ENCODE measurements at regions of chr2 and their contacts with region 1.

Region 1: DNA sequence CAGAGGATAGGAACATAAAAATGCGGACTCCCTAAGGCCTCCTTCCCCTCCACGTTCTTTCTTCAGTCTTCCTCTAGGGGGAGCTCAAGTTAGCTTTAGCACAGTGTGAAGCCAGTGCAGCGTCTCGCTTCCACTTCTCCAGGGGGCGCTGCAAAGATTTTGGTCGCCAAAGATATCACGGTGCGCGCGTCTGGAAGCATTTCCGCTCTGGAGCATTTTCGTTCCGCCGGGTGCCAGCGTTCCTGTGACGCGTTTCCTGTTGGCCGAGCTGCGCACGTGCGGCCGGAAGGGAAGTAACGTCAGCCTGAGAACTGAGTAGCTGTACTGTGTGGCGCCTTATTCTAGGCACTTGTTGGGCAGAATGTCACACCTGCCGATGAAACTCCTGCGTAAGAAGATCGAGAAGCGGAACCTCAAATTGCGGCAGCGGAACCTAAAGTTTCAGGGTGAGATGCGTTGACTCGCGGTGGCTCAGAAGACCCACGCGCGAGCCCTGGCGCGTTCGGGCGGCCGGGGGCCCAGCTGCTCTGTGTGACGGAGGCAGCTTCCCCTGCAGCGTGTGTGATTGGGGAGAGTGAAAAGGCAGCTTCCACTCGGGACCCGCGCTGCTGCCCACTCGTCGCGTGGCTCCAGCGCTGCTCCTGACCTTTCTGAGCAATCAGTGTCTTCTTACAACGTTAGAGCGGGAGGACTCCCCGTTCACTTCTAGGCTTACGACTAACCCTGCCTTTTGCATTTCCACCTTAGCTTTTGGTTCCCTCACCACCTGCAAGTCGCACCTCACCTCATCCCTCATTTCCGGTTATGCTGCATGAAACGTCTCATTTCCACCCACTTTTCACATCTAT is at the start of gene DDX18:
- DNase-seq: peak; percentile 97
- H3K4me3 Mint-ChIP-seq: peak within 1 kb of the TSS; percentile 89
- H3K27ac Mint-ChIP-seq: peak within 1 kb of the TSS; percentile 95
- H3K4me1 Mint-ChIP-seq: peaks cover 37% of the 10 kb centered on the region
- H3K27me3 Mint-ChIP-seq: no peaks in the 10 kb centered on the region
- total RNA-seq, gene DDX18: 58.6 to 70.9 TPM

Region 2: GRCh38 chr2:117801826-117802225 is 12.8 kb before region 1 on chr2:
- CTCF ChIA-PET with region 1: interaction called, 21 read pairs
- POLR2A ChIA-PET with region 1: no interaction called
- DNase-seq: no peak
- H3K4me3 Mint-ChIP-seq: no peak overlapping the region
- H3K27ac Mint-ChIP-seq: no peak overlapping the region
- H3K4me1 Mint-ChIP-seq: peaks cover 4% of the 10 kb centered on the region
- H3K27me3 Mint-ChIP-seq: peaks cover 20% of the 10 kb centered on the region

Region 3: GRCh38 chr2:118013724-118014491 is 199.3 kb after region 1 on chr2 and contains the start of gene CCDC93:
- CTCF ChIA-PET with region 1: interaction called, 12 read pairs
- POLR2A ChIA-PET with region 1: interaction called, 6 read pairs
- DNase-seq: peak; percentile 88
- H3K4me3 Mint-ChIP-seq: peak within 1 kb of the TSS; percentile 93
- H3K27ac Mint-ChIP-seq: peak within 1 kb of the TSS; percentile 84
- H3K4me1 Mint-ChIP-seq: peaks cover 51% of the 10 kb centered on the region
- H3K27me3 Mint-ChIP-seq: peaks cover 4% of the 10 kb centered on the region
- total RNA-seq, gene CCDC93: 35.0 to 35.6 TPM